GM10248 (cell line): ENCODE measurements at regions of chr11 and their contacts with region 1.

Region 1: DNA sequence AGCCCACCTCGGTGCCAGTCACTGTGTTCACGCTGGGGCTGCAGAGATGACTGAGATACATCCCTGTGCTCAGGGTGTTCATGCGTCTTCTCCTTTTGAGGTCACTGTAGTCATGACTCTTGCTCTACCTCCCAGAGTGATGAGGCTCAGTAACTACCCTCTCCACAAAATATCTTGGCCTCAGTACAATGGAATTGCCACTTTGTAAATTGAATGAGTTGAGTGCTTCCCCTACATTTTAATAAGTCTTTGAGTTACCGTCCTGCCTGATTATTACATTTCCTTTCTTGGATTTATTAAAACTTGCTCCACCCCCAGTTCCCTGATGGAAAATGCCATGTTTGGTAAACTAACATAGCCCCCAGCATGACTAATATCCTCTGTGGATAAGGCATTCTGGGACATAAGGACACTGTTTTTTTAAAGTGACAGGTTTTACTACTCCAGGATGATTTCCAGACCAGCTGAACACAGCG is 15.9 kb downstream of the PRSS23 start:
- DNase-seq: no peak
- CTCF ChIP-seq: no peak

Region 2: GRCh38 chr11:86749376-86749775 is 66.9 kb before region 1 on chr11:
- CTCF ChIA-PET with region 1: no interaction called
- POLR2A ChIA-PET with region 1: no interaction called
- DNase-seq: no peak
- CTCF ChIP-seq: no peak

Region 3: DNA sequence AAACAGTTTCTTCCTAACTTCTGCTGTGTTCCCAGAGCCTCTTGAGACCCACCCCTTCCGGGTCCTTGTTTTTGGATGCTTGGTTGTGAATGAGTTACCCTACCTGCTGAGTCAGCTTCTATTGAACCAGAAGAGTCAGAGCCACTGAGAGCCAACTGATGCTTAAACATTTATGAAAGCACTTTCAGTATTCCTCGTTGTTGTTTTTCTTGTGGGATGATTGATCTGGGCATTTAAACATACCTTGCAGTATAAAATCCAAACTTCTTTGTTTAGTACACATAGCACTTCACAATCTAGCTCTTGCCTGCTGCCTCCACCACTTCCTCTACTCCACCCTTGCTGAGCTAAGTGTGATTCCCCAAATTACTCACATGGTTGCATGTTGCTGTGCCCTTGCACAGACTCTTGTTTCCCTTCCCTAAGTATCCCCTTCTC is 10.4 kb before region 1 on chr11:
- CTCF ChIA-PET with region 1: interaction called, 16 read pairs
- POLR2A ChIA-PET with region 1: no interaction called
- DNase-seq: peak; percentile 23
- CTCF ChIP-seq: no peak